ENCODE measurements at regions of chr13 and their contacts with region 1.

Region 1: GRCh38 chr13:32117701-32118100 is 86.1 kb downstream of the FRY start:
- DNase-seq: no peak
- H3K4me3 Mint-ChIP-seq: no peak overlapping the region
- H3K27ac Mint-ChIP-seq: no peak overlapping the region
- H3K4me1 Mint-ChIP-seq: peaks cover 40% of the 10 kb centered on the region
- H3K27me3 Mint-ChIP-seq: no peaks in the 10 kb centered on the region

Region 2: DNA sequence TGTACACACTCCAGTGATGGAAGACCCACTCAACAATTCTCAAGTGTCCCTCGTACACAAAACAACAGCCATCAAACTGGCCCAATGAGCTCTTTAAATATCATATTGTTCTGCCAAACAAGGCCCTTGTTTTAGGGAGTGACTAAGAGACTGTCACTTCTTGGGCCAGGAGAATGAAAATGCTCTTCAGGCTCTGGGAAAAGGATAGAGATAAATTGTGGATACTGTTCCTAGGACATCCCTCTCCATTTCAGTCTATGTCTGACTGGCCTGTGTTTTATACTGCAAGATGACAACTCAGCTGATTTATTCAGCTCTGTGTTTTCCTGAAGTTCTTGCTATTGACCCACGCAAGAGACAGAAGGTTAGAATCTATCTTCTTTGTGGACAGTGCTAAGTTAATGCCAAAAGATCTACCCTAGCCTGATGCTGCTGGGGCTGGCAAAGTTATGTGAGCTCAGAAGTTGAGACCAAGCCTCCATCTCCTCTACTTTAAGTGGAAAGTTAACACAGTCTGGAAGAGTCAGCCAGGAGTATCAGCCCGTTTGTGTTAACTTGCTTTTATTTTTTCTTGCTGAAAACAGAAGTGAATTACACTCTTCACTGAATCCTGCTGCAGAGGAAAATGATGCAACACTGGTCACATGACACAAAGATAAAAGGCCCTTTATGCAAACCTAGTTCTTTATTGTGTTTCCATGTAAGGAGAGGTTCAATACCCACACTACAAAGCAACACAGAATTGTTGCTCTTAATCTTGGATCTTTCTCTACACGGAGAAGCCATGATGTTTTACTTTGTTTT is 71.5 kb before region 1 on chr13:
- intact Hi-C with region 1: loop called (anchors 2 kb)
- DNase-seq: no peak
- H3K4me3 Mint-ChIP-seq: peak overlapping the region; percentile 5
- H3K27ac Mint-ChIP-seq: peak overlapping the region; percentile 67
- H3K4me1 Mint-ChIP-seq: peaks cover 64% of the 10 kb centered on the region
- H3K27me3 Mint-ChIP-seq: no peaks in the 10 kb centered on the region

Region 3: GRCh38 chr13:32315238-32316027 is 197.7 kb after region 1 on chr13 and contains the starts of genes BRCA2 and ZAR1L:
- intact Hi-C with region 1: loop called (anchors 10 kb)
- DNase-seq: peak; percentile 85
- H3K4me3 Mint-ChIP-seq: peak within 1 kb of the TSS; percentile 96
- H3K27ac Mint-ChIP-seq: peak within 1 kb of the TSS; percentile 100
- H3K4me1 Mint-ChIP-seq: peaks cover 32% of the 10 kb centered on the region
- H3K27me3 Mint-ChIP-seq: no peaks in the 10 kb centered on the region
- total RNA-seq, gene BRCA2: 18.6 and 19.4 TPM in 2 replicates
- total RNA-seq, gene ZAR1L: not detected in 2 replicates

Measured in activated T-helper 2 cell treated with anti-CD3 and anti-CD28 coated beads, Interferon-gamma antibody, Interleukin-2, Interleukin-4, amounts not matched to agents 10 μg/mL and 5 μg/mL and 100 μg/mL, durations not matched to agents 14 hours and 24 hours and 36 hours (primary cell).